Activated naive CD8-positive, alpha-beta T cell treated with anti-CD3 and anti-CD28 coated beads, Interleukin-2, amount 10 ng/mL, durations not matched to agents 7 days and 5 days (primary cell): ENCODE measurements at regions of chr11 and their contacts with region 1.

Region 1: GRCh38 chr11:82900277-82901164 is at the start of gene PRCP:
- DNase-seq: peak; percentile 89
- ATAC-seq: peak; percentile 78
- H3K4me3 Mint-ChIP-seq: peak within 1 kb of the TSS; percentile 99
- H3K27ac Mint-ChIP-seq: peak within 1 kb of the TSS; percentile 99
- H3K4me1 Mint-ChIP-seq: peaks cover 50% of the 10 kb centered on the region
- H3K27me3 Mint-ChIP-seq: no peaks in the 10 kb centered on the region
- total RNA-seq, gene PRCP: 21.3 to 25.6 TPM

Region 2: GRCh38 chr11:83193315-83194280 is 293.1 kb after region 1 on chr11 and contains the start of gene ANKRD42:
- POLR2A ChIA-PET with region 1: interaction called, 14 read pairs
- DNase-seq: peak; percentile 82
- ATAC-seq: peak; percentile 72
- H3K4me3 Mint-ChIP-seq: peak within 1 kb of the TSS; percentile 94
- H3K27ac Mint-ChIP-seq: peak within 1 kb of the TSS; percentile 94
- H3K4me1 Mint-ChIP-seq: peaks cover 30% of the 10 kb centered on the region
- H3K27me3 Mint-ChIP-seq: no peaks in the 10 kb centered on the region
- total RNA-seq, gene ANKRD42: 6.2 to 7.4 TPM

Region 3: GRCh38 chr11:83285771-83286528 is 385.4 kb after region 1 on chr11 and contains the start of gene CCDC90B:
- POLR2A ChIA-PET with region 1: interaction called, 24 read pairs
- DNase-seq: peak; percentile 85
- ATAC-seq: peak; percentile 93
- H3K4me3 Mint-ChIP-seq: peak within 1 kb of the TSS; percentile 98
- H3K27ac Mint-ChIP-seq: peak within 1 kb of the TSS; percentile 99
- H3K4me1 Mint-ChIP-seq: peaks cover 27% of the 10 kb centered on the region
- H3K27me3 Mint-ChIP-seq: peaks cover 2% of the 10 kb centered on the region
- total RNA-seq, gene CCDC90B: 33.6 to 34.4 TPM